ENCODE measurements at regions of chr13 and their contacts with region 1.

Region 1: DNA sequence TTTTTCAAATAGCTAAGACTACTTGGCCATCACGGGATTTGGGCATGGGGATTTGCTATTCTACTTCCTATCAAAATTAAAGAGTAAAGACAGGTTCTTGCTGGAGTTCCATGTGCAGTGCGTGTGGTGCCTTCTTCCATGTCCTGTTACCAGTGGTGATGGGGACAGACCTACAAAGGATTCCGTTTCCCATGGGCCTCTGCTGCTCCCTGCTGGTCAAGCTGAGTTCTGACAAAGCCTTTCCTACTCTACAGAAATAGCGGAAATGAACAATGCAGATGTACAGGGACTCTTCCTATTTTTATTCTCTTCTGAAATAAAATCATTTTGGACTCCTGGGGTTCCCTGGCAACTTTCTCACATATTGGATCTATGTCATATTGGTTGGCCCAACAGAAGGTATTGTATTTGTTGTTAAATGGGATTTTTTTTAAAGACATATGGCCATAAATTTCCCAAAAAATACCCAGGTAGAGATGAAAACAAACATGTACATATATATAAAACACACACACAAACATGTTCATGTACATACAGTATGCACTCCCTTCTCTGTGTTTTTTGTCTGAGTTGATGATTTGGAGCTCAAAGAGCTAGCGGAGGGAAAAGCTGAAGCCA is 90.5 kb upstream of the SLC15A1 start:
- DNase-seq: peak; percentile 61
- H3K4me3 ChIP-seq: no peak overlapping the region
- H3K27ac ChIP-seq: no peak overlapping the region
- H3K27me3 ChIP-seq: no peaks in the 10 kb centered on the region
- CTCF ChIP-seq: peak; percentile 93

Region 2: DNA sequence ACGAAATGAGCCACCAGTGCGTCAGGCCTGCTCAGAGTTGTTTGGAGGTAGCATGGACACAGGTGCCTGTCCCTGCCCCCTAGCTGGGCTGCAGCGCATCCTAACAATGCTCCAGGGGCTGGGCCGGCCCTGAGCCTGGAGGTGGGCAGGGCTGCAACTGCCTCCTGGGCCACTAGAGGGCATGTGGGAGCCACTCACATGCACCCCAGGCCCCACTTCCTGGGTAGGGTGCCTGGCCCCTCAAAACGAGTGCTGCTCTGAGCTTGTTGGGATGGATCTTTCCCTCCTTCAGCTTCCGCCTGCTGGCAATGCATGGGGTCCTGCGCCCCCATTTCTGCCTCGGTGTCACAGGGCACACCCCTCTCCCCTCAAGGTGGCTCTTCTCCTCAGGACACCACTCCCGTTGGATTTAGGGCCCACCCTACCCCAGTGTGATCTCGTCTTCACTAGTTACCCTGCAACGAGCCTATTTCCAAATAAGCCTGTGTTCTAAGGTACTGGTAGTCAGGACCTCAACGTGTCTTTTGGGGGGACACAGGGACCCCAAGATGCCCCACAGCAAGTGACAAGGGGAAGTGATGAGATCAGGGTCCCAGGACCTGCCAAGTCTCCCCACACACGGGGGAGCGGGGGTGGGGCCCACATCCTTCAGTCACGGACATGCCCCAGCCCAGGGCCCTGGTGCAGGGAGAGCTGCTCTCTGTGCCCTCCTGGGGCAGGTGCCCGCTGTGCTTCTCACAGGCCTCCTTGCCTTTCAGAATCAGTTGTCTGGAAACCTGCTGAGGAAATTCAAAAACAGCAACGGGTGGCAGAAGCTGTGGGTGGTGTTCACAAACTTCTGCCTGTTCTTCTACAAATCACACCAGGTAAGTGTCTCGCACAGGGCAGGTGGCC is 397.4 kb before region 1 on chr13:
- CTCF ChIA-PET with region 1: interaction called, 10 read pairs
- POLR2A ChIA-PET with region 1: no interaction called
- DNase-seq: no peak
- H3K4me3 ChIP-seq: no peak overlapping the region
- H3K27ac ChIP-seq: no peak overlapping the region
- H3K27me3 ChIP-seq: no peaks in the 10 kb centered on the region
- CTCF ChIP-seq: peak; percentile 98

Region 3: DNA sequence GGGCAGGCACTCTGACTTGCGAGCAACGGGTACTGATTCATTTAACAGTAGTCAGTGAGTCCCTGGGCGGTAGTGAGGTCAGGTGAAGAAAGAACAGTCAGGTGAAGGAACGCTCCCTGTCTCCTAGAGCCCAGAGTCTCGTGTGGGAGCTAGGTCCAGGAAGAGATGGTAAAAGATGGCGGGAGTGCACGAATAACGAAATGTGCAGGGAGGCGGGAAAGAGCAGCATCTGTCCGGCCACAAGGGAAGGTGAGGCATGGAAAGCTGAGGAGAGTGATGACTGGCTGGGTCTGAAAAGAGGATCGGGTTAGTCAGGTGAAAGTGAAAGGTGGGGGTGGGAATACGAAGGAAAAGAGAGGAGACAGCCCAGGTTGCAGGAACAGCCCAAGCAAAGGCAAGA is 26.6 kb before region 1 on chr13:
- CTCF ChIA-PET with region 1: interaction called, 15 read pairs
- POLR2A ChIA-PET with region 1: no interaction called
- DNase-seq: no peak
- H3K4me3 ChIP-seq: no peak overlapping the region
- H3K27ac ChIP-seq: no peak overlapping the region
- H3K27me3 ChIP-seq: no peaks in the 10 kb centered on the region
- CTCF ChIP-seq: no peak

Region 4: DNA sequence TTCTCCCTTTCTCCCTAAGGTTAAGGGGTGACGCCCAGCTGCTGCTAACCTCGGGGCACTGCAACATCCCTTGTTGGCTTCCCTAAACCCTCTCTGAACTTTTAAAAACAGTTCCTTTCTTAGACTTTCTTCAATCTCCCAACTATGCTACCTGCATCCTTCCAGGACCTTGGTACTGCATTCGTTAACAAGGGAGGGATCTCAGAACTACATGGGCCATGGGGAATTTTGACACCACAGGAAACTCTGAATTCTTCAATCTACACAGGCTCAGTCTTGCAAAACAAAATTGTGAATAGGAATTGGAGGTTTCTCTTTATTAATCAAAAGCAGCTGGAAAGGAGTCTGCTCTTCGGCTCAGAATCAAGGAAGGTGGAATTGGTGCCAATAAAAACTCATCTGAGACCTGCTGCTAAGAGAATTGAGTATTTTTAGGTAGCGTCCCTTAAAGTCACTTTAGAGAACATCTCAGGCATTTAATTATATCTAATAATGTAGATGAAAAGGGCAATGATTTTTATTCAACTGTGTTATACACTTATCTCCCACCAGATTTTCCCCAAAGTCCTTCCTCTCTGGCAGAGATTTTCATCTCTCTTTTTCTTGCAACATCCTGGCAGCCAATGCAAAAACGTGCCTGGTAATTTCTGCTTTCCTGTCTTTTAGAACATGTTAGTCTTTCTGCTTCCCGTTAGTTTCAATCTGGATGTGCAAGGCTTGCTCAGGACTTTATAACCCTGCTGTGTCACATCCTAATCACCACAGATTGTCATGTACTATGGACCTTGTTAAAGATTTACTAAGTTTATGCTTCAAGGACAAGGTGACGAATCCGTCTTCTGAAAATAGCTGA is 21.4 kb before region 1 on chr13:
- CTCF ChIA-PET with region 1: interaction called, 15 read pairs
- POLR2A ChIA-PET with region 1: no interaction called
- DNase-seq: no peak
- H3K4me3 ChIP-seq: no peak overlapping the region
- H3K27ac ChIP-seq: no peak overlapping the region
- H3K27me3 ChIP-seq: no peaks in the 10 kb centered on the region
- CTCF ChIP-seq: no peak

Region 5: GRCh38 chr13:98827449-98827848 is 15.5 kb before region 1 on chr13:
- CTCF ChIA-PET with region 1: interaction called, 15 read pairs
- POLR2A ChIA-PET with region 1: no interaction called
- DNase-seq: no peak
- H3K4me3 ChIP-seq: no peak overlapping the region
- H3K27ac ChIP-seq: no peak overlapping the region
- H3K27me3 ChIP-seq: no peaks in the 10 kb centered on the region
- CTCF ChIP-seq: no peak

Region 6: GRCh38 chr13:99033814-99034213 is 190.8 kb after region 1 on chr13:
- CTCF ChIA-PET with region 1: interaction called, 14 read pairs
- POLR2A ChIA-PET with region 1: no interaction called
- DNase-seq: no peak
- H3K4me3 ChIP-seq: no peak overlapping the region
- H3K27ac ChIP-seq: no peak overlapping the region
- H3K27me3 ChIP-seq: no peaks in the 10 kb centered on the region
- CTCF ChIP-seq: peak; percentile 56